Activated CD4-positive, alpha-beta memory T cell treated with anti-CD3 and anti-CD28 coated beads for 36 hours (primary cell): ENCODE measurements at regions of chr2 and their contacts with region 1.

Region 1: GRCh38 chr2:112062894-112063293 is 7.8 kb downstream of the TMEM87B start:
- DNase-seq: peak; percentile 12
- H3K4me3 Mint-ChIP-seq: peak overlapping the region; percentile 17
- H3K27ac Mint-ChIP-seq: peak overlapping the region; percentile 84
- H3K4me1 Mint-ChIP-seq: peaks cover 60% of the 10 kb centered on the region
- H3K27me3 Mint-ChIP-seq: no peaks in the 10 kb centered on the region

Region 2: DNA sequence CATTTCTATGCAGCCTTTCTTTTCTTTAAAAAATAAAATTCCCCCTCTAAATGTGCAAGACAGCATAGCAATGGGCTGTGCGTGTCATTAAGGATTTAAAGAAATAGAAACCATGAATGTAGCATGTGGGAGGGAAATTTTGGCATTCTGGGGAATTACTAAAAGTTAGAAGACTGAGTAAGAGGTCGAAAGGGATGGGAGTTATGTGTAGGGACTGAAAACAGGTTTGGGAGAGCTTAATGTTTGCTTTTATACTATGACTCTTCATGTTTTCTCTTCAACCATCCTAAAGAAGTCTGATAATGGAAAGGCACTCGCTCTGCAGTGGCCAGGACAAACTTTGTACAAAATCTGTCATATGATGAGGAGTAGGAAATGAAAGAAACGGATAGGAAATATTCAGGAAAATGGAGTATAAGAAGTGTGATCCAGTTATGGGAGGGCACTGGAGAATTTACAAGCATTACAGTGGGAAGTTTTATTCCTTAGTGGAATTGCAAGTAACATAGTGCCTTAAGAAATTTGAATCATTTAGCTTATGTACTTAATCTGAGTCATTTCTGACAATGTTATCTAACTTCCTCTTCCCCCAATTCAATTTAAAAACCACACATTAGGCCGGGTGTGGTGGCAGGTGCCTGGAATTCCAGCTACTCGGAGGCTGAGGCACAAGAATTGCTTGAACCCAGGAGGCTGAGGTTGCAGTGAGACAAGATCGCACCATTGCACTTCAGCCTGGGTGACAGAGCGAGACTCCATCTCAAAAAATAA is 12.8 kb after region 1 on chr2:
- CTCF ChIA-PET with region 1: interaction called, 3 read pairs
- POLR2A ChIA-PET with region 1: interaction called, 3 read pairs
- intact Hi-C with region 1: loop called (anchors 1 kb)
- DNase-seq: no peak
- H3K4me3 Mint-ChIP-seq: no peak overlapping the region
- H3K27ac Mint-ChIP-seq: peak overlapping the region; percentile 38
- H3K4me1 Mint-ChIP-seq: peaks cover 52% of the 10 kb centered on the region
- H3K27me3 Mint-ChIP-seq: no peaks in the 10 kb centered on the region